ENCODE measurements at regions of chr15 and their contacts with region 1.

Region 1: DNA sequence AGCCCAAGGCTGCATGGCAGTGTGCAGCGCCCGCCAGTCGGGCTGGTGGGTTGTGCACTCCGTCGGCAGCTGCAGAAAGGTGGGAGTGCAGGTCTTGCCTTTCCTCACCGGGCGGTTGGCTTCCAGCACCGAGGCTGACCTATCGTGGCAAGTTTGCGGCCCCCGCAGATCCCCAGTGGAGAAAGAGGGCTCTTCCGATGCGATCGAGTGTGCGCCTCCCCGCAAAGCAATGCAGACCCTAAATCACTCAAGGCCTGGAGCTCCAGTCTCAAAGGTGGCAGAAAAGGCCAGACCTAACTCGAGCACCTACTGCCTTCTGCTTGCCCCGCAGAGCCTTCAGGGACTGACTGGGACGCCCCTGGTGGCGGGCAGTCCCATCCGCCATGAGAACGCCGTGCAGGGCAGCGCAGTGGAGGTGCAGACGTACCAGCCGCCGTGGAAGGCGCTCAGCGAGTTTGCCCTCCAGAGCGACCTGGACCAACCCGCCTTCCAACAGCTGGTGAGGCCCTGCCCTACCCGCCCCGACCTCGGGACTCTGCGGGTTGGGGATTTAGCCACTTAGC is 4.3 kb downstream of the ISL2 start:
- DNase-seq: peak in 7 of 9 experiments; percentile 27 to 75 (median 47)
- ATAC-seq: peak; percentile 55
- H3K4me3 ChIP-seq: peak overlapping the region; percentile 48 to 61
- H3K4me3 Mint-ChIP-seq: peak overlapping the region; percentile 86
- H3K27ac ChIP-seq: no peak overlapping the region
- H3K27ac Mint-ChIP-seq: no peak overlapping the region
- H3K4me1 ChIP-seq: peaks cover 71% of the 10 kb centered on the region
- H3K4me1 Mint-ChIP-seq: peaks cover 60% of the 10 kb centered on the region
- H3K27me3 ChIP-seq: peaks cover 88 to 90% of the 10 kb centered on the region in 2 experiments
- H3K27me3 Mint-ChIP-seq: peaks cover 72% of the 10 kb centered on the region
- CTCF ChIP-seq: no peak

Region 2: GRCh38 chr15:76311100-76311953 is 29.6 kb before region 1 on chr15 and contains the start of gene ETFA:
- CTCF ChIA-PET with region 1: no interaction called
- POLR2A ChIA-PET with region 1: interaction called, 5 read pairs
- intact Hi-C with region 1: loop called in 1 of 2 experiments (anchors 2 kb)
- DNase-seq: peak; percentile 70 to 94 (median 86)
- ATAC-seq: peak; percentile 93
- H3K4me3 ChIP-seq: peak within 1 kb of the TSS; percentile 93 to 99
- H3K4me3 Mint-ChIP-seq: peak within 1 kb of the TSS; percentile 89
- H3K27ac ChIP-seq: peak within 1 kb of the TSS; percentile 64 to 89
- H3K27ac Mint-ChIP-seq: peak within 1 kb of the TSS; percentile 86
- H3K4me1 ChIP-seq: peaks cover 21% of the 10 kb centered on the region
- H3K4me1 Mint-ChIP-seq: peaks cover 38% of the 10 kb centered on the region
- H3K27me3 ChIP-seq: no peaks in the 10 kb centered on the region
- H3K27me3 Mint-ChIP-seq: peaks cover 3% of the 10 kb centered on the region
- CTCF ChIP-seq: no peak
- total RNA-seq, gene ETFA: 18.0 to 18.1 TPM

Measured in CD8-positive, alpha-beta T cell (primary cell).